Naive thymus-derived CD4-positive, alpha-beta T cell (primary cell): ENCODE measurements at regions of chr12 and their contacts with region 1.

Region 1: DNA sequence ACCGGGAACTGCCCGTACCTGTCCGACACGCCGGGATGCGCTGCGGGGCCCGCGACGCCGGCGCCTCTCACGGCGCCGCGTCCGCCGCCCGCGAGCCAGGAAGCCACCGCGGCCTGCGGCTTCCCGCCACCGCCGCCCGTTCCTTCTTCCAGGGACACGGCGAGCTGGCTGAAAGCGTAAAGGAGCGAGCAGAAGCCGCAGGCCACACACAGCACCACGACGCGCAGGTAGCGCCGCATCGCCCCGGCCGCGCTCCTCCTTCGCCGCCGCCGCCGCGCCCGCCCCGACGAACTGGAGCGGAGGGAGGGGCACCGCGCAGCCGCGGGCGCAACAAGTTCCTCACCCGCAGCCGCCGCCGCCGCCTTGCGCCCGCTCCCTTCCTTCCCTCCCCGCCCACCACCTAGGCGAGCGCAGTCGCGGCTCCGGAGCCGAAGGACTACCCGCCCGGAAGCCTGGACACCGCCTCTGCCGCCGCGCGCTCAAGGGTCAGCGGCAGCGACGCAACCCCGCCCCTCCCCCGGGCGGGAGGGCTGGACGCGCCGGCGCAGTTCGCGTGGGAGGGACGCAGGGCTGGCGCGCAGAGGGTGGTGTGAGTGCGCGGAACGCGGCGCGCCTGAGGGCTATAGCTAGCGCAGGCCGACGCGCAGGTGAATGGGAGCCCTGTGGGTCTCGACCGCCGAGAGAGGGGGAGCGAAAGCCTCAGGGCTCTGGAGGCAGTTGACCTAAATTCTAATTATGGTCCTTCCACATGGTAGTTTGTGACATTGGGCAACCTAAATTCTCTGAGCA is at the start of gene GXYLT1:
- DNase-seq: peak; percentile 60 to 89 (median 73)
- ATAC-seq: peak; percentile 94
- H3K4me3 ChIP-seq: peak within 1 kb of the TSS; percentile 54
- H3K4me3 Mint-ChIP-seq: peak within 1 kb of the TSS; percentile 89 to 98 (median 94)
- H3K27ac ChIP-seq: peak within 1 kb of the TSS; percentile 62
- H3K27ac Mint-ChIP-seq: peak within 1 kb of the TSS; percentile 80 to 95 (median 89)
- H3K4me1 ChIP-seq: peaks cover 7 to 11% of the 10 kb centered on the region in 2 donors
- H3K4me1 Mint-ChIP-seq: peaks cover 32 to 54% (median 45%) of the 10 kb centered on the region in 7 donors
- H3K27me3 ChIP-seq: no peaks in the 10 kb centered on the region
- H3K27me3 Mint-ChIP-seq: peaks cover 0 to 11% (median 0%) of the 10 kb centered on the region in 5 donors
- total RNA-seq, gene GXYLT1: 6.7 to 9.7 (median 7.2) TPM

Region 2: DNA sequence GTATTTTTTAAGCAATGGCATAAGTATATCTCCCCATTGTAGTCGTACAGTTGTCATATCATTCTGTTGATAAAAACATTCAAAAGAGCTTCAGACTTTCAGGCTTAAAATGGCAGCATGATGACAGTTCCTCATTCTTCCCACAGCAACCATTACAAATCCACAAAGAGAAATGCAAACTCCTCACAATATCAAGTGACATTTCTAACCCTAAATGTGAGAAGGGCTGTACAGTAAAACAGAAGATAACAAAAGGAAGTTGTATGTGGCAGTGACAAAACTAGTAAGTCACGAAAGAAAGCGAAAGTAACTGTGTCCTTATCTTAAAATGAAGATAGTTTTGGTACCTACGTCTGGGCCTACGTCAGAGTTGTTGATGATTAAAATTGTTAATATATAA is 46.6 kb before region 1 on chr12:
- CTCF ChIA-PET with region 1: no interaction called
- POLR2A ChIA-PET with region 1: interaction called, 6 read pairs
- intact Hi-C with region 1: loop called (anchors 1 to 2 kb)
- DNase-seq: peak in 7 of 9 donors; percentile 56 to 79 (median 68)
- ATAC-seq: peak; percentile 94
- H3K4me3 ChIP-seq: peak overlapping the region; percentile 48
- H3K4me3 Mint-ChIP-seq: peak overlapping the region; percentile 84 to 97 (median 90)
- H3K27ac ChIP-seq: peak overlapping the region; percentile 82
- H3K27ac Mint-ChIP-seq: peak overlapping the region; percentile 92 to 100 (median 97)
- H3K4me1 ChIP-seq: peaks cover 24 to 31% of the 10 kb centered on the region in 2 donors
- H3K4me1 Mint-ChIP-seq: peaks cover 33 to 48% (median 43%) of the 10 kb centered on the region in 7 donors
- H3K27me3 ChIP-seq: no peaks in the 10 kb centered on the region
- H3K27me3 Mint-ChIP-seq: no peaks in the 10 kb centered on the region

Region 3: DNA sequence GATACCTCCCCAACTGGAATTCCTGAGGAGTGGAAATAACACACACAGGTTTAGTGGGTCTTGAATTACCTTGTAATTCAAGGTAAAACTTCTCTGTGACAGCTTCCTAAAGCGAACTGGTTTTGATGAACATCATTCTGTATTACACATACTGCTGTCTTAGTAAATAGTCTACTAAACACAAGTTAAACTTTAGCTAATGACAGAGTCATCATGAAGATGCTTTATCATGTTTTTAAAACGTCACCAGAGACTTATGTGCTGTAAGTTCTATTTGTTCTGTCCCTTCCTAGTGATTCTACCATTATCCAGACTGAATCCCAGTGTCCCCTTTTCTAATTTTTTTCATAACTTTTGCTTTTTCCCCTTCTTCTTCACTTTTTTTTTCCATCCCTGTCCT is 11.6 kb after region 1 on chr12:
- CTCF ChIA-PET with region 1: no interaction called
- POLR2A ChIA-PET with region 1: no interaction called
- intact Hi-C with region 1: loop called in 1 of 2 experiments (anchors 1 kb)
- DNase-seq: no peak
- ATAC-seq: no peak
- H3K4me3 ChIP-seq: no peak overlapping the region
- H3K4me3 Mint-ChIP-seq: no peak overlapping the region
- H3K27ac ChIP-seq: no peak overlapping the region
- H3K27ac Mint-ChIP-seq: peak overlapping the region in 1 of 9 donors; percentile 3
- H3K4me1 ChIP-seq: no peaks in the 10 kb centered on the region
- H3K4me1 Mint-ChIP-seq: no peaks in the 10 kb centered on the region
- H3K27me3 ChIP-seq: no peaks in the 10 kb centered on the region
- H3K27me3 Mint-ChIP-seq: peaks cover 0 to 2% (median 0%) of the 10 kb centered on the region in 5 donors

Region 4: GRCh38 chr12:42161529-42161928 is 16.9 kb after region 1 on chr12:
- CTCF ChIA-PET with region 1: no interaction called
- POLR2A ChIA-PET with region 1: no interaction called
- intact Hi-C with region 1: loop called in 1 of 2 experiments (anchors 1 kb)
- DNase-seq: no peak
- ATAC-seq: no peak
- H3K4me3 ChIP-seq: no peak overlapping the region
- H3K4me3 Mint-ChIP-seq: no peak overlapping the region
- H3K27ac ChIP-seq: no peak overlapping the region
- H3K27ac Mint-ChIP-seq: peak overlapping the region in 5 of 9 donors; percentile 3 to 87 (median 26)
- H3K4me1 ChIP-seq: no peaks in the 10 kb centered on the region
- H3K4me1 Mint-ChIP-seq: peaks cover 4 to 34% (median 22%) of the 10 kb centered on the region in 7 donors
- H3K27me3 ChIP-seq: no peaks in the 10 kb centered on the region
- H3K27me3 Mint-ChIP-seq: no peaks in the 10 kb centered on the region

Region 5: GRCh38 chr12:42180990-42181596 is 36.5 kb after region 1 on chr12:
- CTCF ChIA-PET with region 1: no interaction called
- POLR2A ChIA-PET with region 1: no interaction called
- intact Hi-C with region 1: loop called in 1 of 2 experiments (anchors 2 kb)
- DNase-seq: no peak
- ATAC-seq: no peak
- H3K4me3 ChIP-seq: no peak overlapping the region
- H3K4me3 Mint-ChIP-seq: no peak overlapping the region
- H3K27ac ChIP-seq: no peak overlapping the region
- H3K27ac Mint-ChIP-seq: peak overlapping the region in 2 of 9 donors; percentile 45 to 57
- H3K4me1 ChIP-seq: no peaks in the 10 kb centered on the region
- H3K4me1 Mint-ChIP-seq: peaks cover 4 to 43% (median 33%) of the 10 kb centered on the region in 7 donors
- H3K27me3 ChIP-seq: no peaks in the 10 kb centered on the region
- H3K27me3 Mint-ChIP-seq: no peaks in the 10 kb centered on the region

Region 6: DNA sequence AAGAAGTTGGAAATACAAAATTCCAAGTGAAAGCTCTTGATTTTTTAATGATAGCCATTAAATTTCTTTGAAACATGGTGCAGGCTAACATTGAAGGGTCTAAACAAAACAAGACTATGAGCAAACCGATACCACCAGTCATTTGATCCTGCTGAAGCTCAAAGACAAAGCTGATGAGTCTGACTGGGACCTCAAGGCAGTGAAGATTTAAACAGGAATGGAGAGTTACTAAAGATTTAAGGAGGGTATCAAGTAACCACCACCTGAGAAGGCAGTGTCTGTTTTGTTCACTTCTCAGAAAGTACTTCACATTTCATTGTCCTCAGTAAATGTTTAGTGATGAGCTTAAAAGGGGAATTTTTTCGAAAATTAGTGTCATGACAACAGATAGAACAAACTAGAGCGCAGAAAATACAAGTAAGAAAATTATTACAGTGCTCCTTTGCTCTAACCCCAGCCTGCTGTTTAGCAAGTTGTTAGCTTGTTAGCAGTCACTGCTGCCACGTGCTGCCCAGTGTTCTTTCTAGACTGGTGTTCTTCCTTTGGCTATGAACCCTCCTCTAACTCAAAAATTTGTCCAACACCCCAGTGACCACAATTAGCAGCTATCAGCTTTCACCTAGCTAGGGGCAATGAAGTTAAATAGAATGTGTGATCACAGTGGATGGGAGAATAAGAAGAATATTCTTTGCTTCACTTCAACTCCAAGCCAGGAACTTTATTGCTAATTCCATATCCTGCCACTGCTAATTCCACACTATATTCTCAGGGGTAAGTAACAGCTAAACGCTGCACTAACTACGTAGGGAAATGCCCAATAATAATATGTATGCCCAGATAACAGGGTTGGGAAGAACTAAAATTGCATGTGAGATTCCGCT is 52.4 kb after region 1 on chr12:
- CTCF ChIA-PET with region 1: no interaction called
- POLR2A ChIA-PET with region 1: no interaction called
- intact Hi-C with region 1: no loop called
- DNase-seq: no peak
- ATAC-seq: no peak
- H3K4me3 ChIP-seq: no peak overlapping the region
- H3K4me3 Mint-ChIP-seq: no peak overlapping the region
- H3K27ac ChIP-seq: no peak overlapping the region
- H3K27ac Mint-ChIP-seq: peak overlapping the region in 2 of 9 donors; percentile 27 to 30
- H3K4me1 ChIP-seq: no peaks in the 10 kb centered on the region
- H3K4me1 Mint-ChIP-seq: peaks cover 0 to 27% (median 22%) of the 10 kb centered on the region in 7 donors
- H3K27me3 ChIP-seq: no peaks in the 10 kb centered on the region
- H3K27me3 Mint-ChIP-seq: no peaks in the 10 kb centered on the region

Region 7: DNA sequence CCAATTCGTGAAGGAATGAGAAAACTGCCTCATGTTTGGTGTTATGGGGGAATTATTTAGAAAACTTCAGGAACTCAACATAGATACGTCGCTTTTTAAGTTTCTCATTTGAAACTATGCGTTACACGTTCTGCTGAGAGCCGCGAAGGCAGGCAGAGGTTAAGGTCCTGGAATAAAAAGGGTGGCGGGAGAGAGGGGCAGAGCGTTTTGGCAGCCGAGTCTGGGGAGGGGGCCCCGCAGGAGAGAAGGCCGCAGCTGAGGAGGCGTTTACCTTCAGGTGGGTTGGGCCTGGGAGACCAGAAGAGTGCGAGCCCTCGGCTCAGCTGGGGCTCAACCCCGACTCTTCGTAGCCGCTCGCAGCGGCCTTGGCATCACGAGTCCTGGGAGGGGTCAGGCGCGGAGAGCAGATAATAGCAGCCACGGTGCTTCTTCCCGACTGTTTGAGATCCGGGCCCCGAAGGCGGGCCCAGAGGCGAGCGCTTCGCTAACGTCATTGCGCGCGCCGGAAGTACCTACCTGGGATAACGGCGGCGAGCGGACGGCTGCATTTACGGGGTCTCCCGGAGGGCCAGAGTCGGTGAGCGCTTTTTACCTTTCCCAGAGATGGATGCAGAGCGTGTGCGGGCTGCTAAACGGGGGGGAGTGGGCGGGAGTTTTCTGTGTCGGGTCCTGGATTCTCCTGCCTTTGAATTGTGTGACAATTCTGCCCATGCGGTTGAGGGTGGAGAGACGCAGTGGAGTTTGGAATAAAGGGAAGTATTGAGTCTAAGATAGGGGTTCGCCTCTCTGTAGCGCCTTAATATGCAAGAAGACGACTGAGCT is 181.3 kb after region 1 on chr12 and contains the starts of genes PPHLN1 and ZCRB1:
- CTCF ChIA-PET with region 1: no interaction called
- POLR2A ChIA-PET with region 1: interaction called, 4 read pairs
- intact Hi-C with region 1: loop called (anchors 1 kb)
- DNase-seq: peak; percentile 61 to 79 (median 74)
- ATAC-seq: peak; percentile 94
- H3K4me3 ChIP-seq: peak within 1 kb of the TSS; percentile 69
- H3K4me3 Mint-ChIP-seq: peak within 1 kb of the TSS; percentile 92 to 100 (median 98)
- H3K27ac ChIP-seq: peak within 1 kb of the TSS; percentile 80
- H3K27ac Mint-ChIP-seq: peak within 1 kb of the TSS; percentile 93 to 99 (median 97)
- H3K4me1 ChIP-seq: peaks cover 15 to 20% of the 10 kb centered on the region in 2 donors
- H3K4me1 Mint-ChIP-seq: peaks cover 33 to 57% (median 50%) of the 10 kb centered on the region in 7 donors
- H3K27me3 ChIP-seq: no peaks in the 10 kb centered on the region
- H3K27me3 Mint-ChIP-seq: no peaks in the 10 kb centered on the region
- total RNA-seq, gene PPHLN1: 89.1 to 97.6 (median 90.2) TPM
- total RNA-seq, gene ZCRB1: 20.3 to 47.5 (median 23.8) TPM

Region 8: GRCh38 chr12:42372154-42372791 is 227.7 kb after region 1 on chr12:
- CTCF ChIA-PET with region 1: interaction called, 3 read pairs
- POLR2A ChIA-PET with region 1: no interaction called
- intact Hi-C with region 1: loop called in 1 of 2 experiments (anchors 5 kb)
- DNase-seq: peak in 7 of 9 donors; percentile 26 to 61 (median 49)
- ATAC-seq: peak; percentile 93
- H3K4me3 ChIP-seq: no peak overlapping the region
- H3K4me3 Mint-ChIP-seq: no peak overlapping the region
- H3K27ac ChIP-seq: no peak overlapping the region
- H3K27ac Mint-ChIP-seq: no peak overlapping the region
- H3K4me1 ChIP-seq: no peaks in the 10 kb centered on the region
- H3K4me1 Mint-ChIP-seq: peaks cover 4 to 32% (median 15%) of the 10 kb centered on the region in 7 donors
- H3K27me3 ChIP-seq: no peaks in the 10 kb centered on the region
- H3K27me3 Mint-ChIP-seq: no peaks in the 10 kb centered on the region